AG04450 (cell line): ENCODE measurements at regions of chr5 and their contacts with region 1.

Region 1: GRCh38 chr5:180494510-180495181 is 467 bp downstream of the CNOT6 start:
- DNase-seq: no peak
- H3K4me3 ChIP-seq: peak overlapping the region; percentile 82
- H3K27ac ChIP-seq: peak overlapping the region; percentile 80
- H3K27me3 ChIP-seq: no peaks in the 10 kb centered on the region
- CTCF ChIP-seq: no peak

Region 2: GRCh38 chr5:180507661-180508060 is 13.0 kb after region 1 on chr5:
- CTCF ChIA-PET with region 1: no interaction called
- POLR2A ChIA-PET with region 1: interaction called, 13 read pairs
- DNase-seq: no peak
- H3K4me3 ChIP-seq: no peak overlapping the region
- H3K27ac ChIP-seq: no peak overlapping the region
- H3K27me3 ChIP-seq: no peaks in the 10 kb centered on the region
- CTCF ChIP-seq: no peak